ENCODE measurements at regions of chr10 and their contacts with region 1.

Region 1: DNA sequence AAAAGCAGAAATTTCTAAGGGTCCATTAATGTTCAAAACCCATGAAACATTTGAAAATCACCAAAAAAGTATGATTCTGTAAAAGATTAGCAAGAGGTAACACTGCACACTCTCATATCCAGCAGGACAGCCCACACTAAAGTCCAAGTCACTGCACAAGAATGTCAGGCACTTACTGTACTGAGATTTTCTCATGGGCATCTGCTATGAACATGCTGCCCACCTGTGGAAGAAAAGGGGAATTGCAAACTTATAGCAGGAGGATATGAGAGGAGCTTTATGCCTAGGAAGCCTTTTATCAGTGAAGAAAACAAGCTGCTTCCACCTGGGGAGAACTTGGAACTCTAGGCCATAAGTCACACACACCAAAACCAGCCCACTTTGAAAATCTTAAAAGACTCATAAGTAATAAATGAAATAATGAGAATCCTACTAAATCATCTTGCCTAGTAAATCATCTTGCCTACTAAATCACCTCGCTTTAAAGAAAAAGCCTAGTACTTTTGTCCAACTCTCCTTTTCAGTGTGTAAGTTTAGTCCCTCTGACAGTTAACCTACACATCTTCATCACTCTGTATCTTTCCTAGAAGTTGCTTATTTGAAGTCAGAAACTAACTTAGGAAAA is 46.1 kb downstream of the ARMH3 start:
- DNase-seq: peak in 1 of 2 donors; percentile 75
- ATAC-seq: peak; percentile 80 to 92 (median 90)
- H3K4me3 ChIP-seq: no peak overlapping the region
- H3K4me3 Mint-ChIP-seq: no peak overlapping the region
- H3K27ac ChIP-seq: no peak overlapping the region
- H3K27ac Mint-ChIP-seq: no peak overlapping the region
- H3K4me1 ChIP-seq: no peaks in the 10 kb centered on the region
- H3K4me1 Mint-ChIP-seq: peaks cover 4 to 5% of the 10 kb centered on the region in 2 donors
- H3K27me3 ChIP-seq: no peaks in the 10 kb centered on the region
- H3K27me3 Mint-ChIP-seq: no peaks in the 10 kb centered on the region
- CTCF ChIP-seq: peak; percentile 69

Region 2: DNA sequence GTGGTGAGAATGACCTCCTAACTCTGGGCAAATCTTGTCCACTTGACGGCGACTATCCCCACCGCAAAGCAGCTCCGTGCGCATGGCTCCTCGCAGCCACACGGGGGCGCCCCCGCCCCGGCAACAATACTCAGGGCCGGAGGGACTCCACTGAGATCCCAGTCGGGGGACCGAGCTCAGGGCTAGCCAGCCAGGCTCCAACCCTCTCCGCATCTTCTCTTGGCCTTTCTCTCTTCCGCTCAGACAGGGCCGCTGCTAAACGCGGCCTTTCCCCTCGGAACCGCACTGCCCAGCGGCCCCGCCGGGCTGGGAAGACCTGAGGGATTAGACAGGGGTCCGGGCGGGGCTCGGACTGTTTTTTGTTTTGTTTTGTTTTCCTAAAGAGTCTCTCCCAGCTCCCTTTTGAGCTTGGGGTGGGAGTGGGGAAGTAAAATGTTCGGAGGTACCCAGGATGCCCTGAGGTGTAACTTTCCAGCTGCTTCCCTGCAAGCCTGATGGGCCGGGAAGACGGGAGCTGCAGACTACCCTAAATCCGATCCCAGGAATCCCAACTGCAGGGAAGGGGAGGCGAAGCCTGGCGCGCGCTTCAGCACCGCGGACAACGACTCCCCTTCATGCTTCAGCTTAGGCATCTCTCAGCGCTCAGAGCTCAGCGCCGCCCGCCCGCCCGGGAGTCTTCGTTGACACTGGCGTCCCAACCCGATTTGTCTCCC is 169.0 kb before region 1 on chr10:
- intact Hi-C with region 1: loop called (anchors 1 kb)
- DNase-seq: peak; percentile 76 to 84
- ATAC-seq: peak; percentile 73 to 84 (median 77)
- H3K4me3 ChIP-seq: peak overlapping the region; percentile 19
- H3K4me3 Mint-ChIP-seq: peak overlapping the region; percentile 92
- H3K27ac ChIP-seq: no peak overlapping the region
- H3K27ac Mint-ChIP-seq: peak overlapping the region in 1 of 2 donors; percentile 72
- H3K4me1 ChIP-seq: peaks cover 42% of the 10 kb centered on the region
- H3K4me1 Mint-ChIP-seq: peaks cover 14 to 47% of the 10 kb centered on the region in 2 donors
- H3K27me3 ChIP-seq: peaks cover 2% of the 10 kb centered on the region
- H3K27me3 Mint-ChIP-seq: peaks cover 13 to 15% of the 10 kb centered on the region in 2 donors
- CTCF ChIP-seq: peak; percentile 90

Region 3: GRCh38 chr10:101889256-101890210 is 120.4 kb before region 1 on chr10:
- intact Hi-C with region 1: loop called (anchors 1 kb)
- DNase-seq: peak; percentile 44 to 73
- ATAC-seq: peak; percentile 60 to 70 (median 67)
- H3K4me3 ChIP-seq: no peak overlapping the region
- H3K4me3 Mint-ChIP-seq: no peak overlapping the region
- H3K27ac ChIP-seq: no peak overlapping the region
- H3K27ac Mint-ChIP-seq: peak overlapping the region in 1 of 2 donors; percentile 25
- H3K4me1 ChIP-seq: no peaks in the 10 kb centered on the region
- H3K4me1 Mint-ChIP-seq: peaks cover 0 to 17% of the 10 kb centered on the region in 2 donors
- H3K27me3 ChIP-seq: no peaks in the 10 kb centered on the region
- H3K27me3 Mint-ChIP-seq: no peaks in the 10 kb centered on the region
- CTCF ChIP-seq: peak; percentile 73